ENCODE measurements at regions of chr2 and their contacts with region 1.

Region 1: GRCh38 chr2:76599732-76600368 is 889.1 kb upstream of the GCFC2 start:
- DNase-seq: peak; percentile 60 to 91
- H3K4me3 ChIP-seq: no peak overlapping the region
- H3K27ac ChIP-seq: no peak overlapping the region
- H3K4me1 ChIP-seq: no peaks in the 10 kb centered on the region
- H3K27me3 ChIP-seq: no peaks in the 10 kb centered on the region
- CTCF ChIP-seq: peak in 5 of 7 experiments; percentile 37 to 75 (median 61)
- EP300 ChIP-seq: no peak
- POLR2A ChIP-seq: no peak

Region 2: GRCh38 chr2:76197842-76198448 is 401.9 kb before region 1 on chr2:
- intact Hi-C with region 1: loop called (anchors 10 kb)
- DNase-seq: peak; percentile 64 to 79
- H3K4me3 ChIP-seq: no peak overlapping the region
- H3K27ac ChIP-seq: no peak overlapping the region
- H3K4me1 ChIP-seq: no peaks in the 10 kb centered on the region
- H3K27me3 ChIP-seq: no peaks in the 10 kb centered on the region
- CTCF ChIP-seq: peak in 5 of 7 experiments; percentile 25 to 79 (median 54)
- EP300 ChIP-seq: no peak
- POLR2A ChIP-seq: no peak

Region 3: DNA sequence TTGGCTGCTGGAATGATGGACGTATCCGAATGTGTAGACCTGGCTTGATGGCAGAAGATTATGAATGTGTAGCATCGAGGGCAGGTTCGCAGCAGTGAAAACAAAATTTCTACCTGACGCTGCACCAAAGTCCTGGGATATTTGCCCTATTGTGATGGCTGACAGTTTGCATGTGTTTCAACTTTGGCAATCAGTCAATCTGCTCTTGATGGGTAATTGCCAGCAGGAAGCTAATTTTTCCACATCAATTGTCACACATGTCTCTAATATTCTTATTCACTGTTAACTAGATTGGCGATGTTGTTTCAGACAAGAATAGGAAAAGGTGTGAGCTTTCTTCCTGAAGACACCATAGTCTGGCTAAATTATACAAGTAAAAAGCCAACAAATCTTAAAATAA is 101.0 kb after region 1 on chr2:
- intact Hi-C with region 1: no loop called
- DNase-seq: no peak
- H3K4me3 ChIP-seq: no peak overlapping the region
- H3K27ac ChIP-seq: no peak overlapping the region
- H3K4me1 ChIP-seq: no peaks in the 10 kb centered on the region
- H3K27me3 ChIP-seq: no peaks in the 10 kb centered on the region
- CTCF ChIP-seq: no peak
- EP300 ChIP-seq: no peak
- POLR2A ChIP-seq: no peak

Measured in stomach (tissue), 19 donors.